SK-N-SH (cell line): ENCODE measurements at regions of chr17 and their contacts with region 1.

Region 1: GRCh38 chr17:63859257-63859656 is 14.2 kb downstream of the CSH2 start:
- DNase-seq: no peak
- H3K4me3 ChIP-seq: no peak overlapping the region
- H3K27ac ChIP-seq: no peak overlapping the region
- H3K4me1 ChIP-seq: no peaks in the 10 kb centered on the region
- H3K27me3 ChIP-seq: peaks cover 31% of the 10 kb centered on the region
- CTCF ChIP-seq: no peak
- EP300 ChIP-seq: no peak
- RAD21 ChIP-seq: no peak

Region 2: GRCh38 chr17:63665527-63666214 is 193.6 kb before region 1 on chr17:
- CTCF ChIA-PET with region 1: no interaction called
- POLR2A ChIA-PET with region 1: no interaction called
- DNase-seq: no peak
- H3K4me3 ChIP-seq: no peak overlapping the region
- H3K27ac ChIP-seq: no peak overlapping the region
- H3K4me1 ChIP-seq: no peaks in the 10 kb centered on the region
- H3K27me3 ChIP-seq: no peaks in the 10 kb centered on the region
- CTCF ChIP-seq: no peak
- EP300 ChIP-seq: no peak
- RAD21 ChIP-seq: no peak

Region 3: GRCh38 chr17:63881876-63882601 is 22.8 kb after region 1 on chr17 and contains the start of gene GH2:
- CTCF ChIA-PET with region 1: interaction called, 11 read pairs
- POLR2A ChIA-PET with region 1: no interaction called
- DNase-seq: peak; percentile 85
- H3K4me3 ChIP-seq: no peak within 1 kb of the TSS
- H3K27ac ChIP-seq: no peak within 1 kb of the TSS
- H3K4me1 ChIP-seq: no peaks in the 10 kb centered on the region
- H3K27me3 ChIP-seq: peaks cover 5% of the 10 kb centered on the region
- CTCF ChIP-seq: peak; percentile 51
- EP300 ChIP-seq: no peak
- RAD21 ChIP-seq: no peak
- polyA plus RNA-seq, gene GH2: not detected in 2 replicates